Left colon (tissue), 2 donors: ENCODE measurements at regions of chr11 and their contacts with region 1.

Region 1: GRCh38 chr11:114262681-114263512 is 33.3 kb upstream of the NNMT start:
- DNase-seq: no peak
- ATAC-seq: peak; percentile 82

Region 2: DNA sequence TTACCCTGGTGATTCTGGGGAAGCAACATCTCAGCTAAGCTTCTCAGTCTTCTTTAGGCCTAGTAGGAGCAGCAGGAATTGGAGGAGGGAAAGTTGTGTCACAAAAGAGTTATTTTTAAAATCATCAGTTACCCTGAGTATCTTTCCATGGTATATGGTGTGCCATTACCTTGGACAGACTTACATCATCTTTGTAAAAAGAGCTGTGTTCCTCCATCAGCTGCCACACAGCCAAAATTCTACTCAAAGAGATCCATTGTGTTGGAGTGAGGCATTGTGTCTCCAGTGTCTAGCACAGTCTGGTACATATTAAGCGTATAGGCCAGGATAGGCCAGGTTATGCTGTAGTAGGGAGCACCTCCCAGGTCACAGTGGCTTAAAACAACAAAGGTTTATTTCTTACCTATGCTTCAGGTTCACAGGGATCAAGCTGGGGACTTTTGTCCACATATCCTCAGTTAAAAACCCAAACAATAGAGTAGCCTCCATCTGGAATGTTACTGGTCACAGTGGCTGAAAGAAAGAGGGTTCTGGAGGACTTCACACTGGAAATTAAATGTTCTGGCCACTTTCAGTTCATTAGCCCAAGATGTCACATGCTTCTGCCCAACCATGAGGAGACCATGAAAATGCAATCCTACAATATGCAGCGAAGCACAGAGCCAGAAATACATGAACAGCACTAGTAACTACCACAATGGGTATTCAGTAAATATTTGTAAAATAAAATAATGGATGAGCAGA is 546.8 kb before region 1 on chr11:
- intact Hi-C with region 1: no loop called
- DNase-seq: no peak
- ATAC-seq: no peak

Region 3: GRCh38 chr11:113896156-113896879 is 366.6 kb before region 1 on chr11:
- intact Hi-C with region 1: loop called (anchors 5 to 10 kb)
- DNase-seq: peak in 1 of 2 donors; percentile 62
- ATAC-seq: peak; percentile 71

Region 4: DNA sequence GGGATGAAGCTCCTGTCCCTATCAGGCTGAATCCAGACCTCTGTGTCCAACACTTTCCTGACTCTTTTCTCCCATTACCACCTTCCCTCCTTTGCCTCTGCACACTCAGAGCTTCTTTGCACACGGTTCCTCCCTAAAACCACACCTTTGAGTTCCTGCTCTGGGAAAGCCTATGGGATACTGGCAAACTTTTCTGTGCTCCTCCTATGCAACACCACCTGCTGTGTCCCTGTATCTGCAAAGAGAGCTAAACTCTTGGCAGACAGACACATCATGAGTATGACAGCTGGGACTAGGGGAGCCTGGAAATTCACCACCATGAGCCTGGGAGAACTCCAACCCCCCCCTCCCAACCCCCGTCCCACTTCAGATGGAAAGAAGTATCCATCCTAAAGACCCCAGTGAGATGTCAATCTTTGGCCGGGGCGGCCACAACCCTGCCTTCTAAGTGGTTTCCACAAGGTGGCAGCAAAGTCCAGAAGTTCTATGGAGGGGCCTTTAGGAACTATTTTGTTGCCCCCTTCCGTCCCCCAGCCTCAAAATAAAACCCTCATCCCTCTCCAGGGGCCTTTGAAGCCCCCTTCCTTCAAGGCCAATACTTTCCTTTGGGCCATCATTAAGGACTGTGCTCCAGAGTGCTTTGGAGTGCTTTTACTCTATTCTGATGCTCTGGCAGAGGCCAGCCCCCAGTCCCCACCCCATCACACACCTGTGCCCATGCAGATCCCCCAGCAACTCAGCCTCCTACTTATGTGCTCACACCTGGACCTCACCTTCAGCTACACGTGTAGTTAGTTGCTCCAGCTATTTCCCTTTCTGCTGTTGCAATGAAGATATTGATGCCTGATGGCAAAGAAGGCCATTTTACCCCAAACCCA is 268.6 kb before region 1 on chr11:
- intact Hi-C with region 1: loop called (anchors 5 kb)
- DNase-seq: peak in 1 of 2 donors; percentile 26
- ATAC-seq: peak; percentile 45

Region 5: GRCh38 chr11:114036156-114036811 is 226.6 kb before region 1 on chr11:
- intact Hi-C with region 1: loop called in 1 of 2 experiments (anchors 5 kb)
- DNase-seq: peak; percentile 79 to 84
- ATAC-seq: peak; percentile 79